AG04449 (cell line): ENCODE measurements at regions of chr19 and their contacts with region 1.

Region 1: GRCh38 chr19:55494172-55494761 is 6.0 kb downstream of the SSC5D start:
- DNase-seq: no peak
- H3K4me3 ChIP-seq: peak overlapping the region; percentile 51
- CTCF ChIP-seq: no peak

Region 2: DNA sequence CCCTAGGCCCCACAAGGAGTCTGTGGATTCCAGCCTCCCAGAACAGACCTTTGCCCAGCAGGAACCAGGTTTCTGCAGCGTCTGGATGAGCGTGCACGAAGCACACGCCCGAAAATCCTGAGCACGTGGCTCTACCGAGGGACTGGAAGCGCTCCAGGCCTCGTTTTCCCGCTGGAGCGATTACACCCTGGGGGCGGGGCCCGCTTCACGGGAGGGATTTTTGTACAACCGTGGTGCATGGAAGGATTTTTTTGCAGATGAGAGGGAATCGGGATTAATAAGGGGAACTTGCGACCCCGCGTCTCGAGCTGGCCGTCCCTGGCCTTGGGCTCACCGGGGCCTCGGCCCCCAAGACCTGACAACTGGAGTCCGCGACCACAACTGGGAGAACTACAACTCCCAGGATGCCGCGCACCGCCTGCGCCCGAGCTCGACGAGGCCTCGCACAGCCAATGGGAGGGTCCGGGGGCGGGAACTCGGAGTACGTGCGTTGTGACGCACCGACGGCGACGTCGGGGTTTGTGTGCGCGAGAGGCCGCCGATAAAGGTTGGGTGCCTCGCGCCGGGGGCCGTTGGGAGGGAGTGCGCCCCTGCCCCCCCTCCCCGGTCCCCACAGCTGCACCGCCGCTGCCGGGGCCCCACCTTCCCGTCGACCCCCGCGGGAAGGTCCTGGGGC is 18.0 kb before region 1 on chr19 and contains the start of gene ZNF628:
- CTCF ChIA-PET with region 1: interaction called, 3 read pairs
- POLR2A ChIA-PET with region 1: interaction called, 44 read pairs
- DNase-seq: peak; percentile 77
- H3K4me3 ChIP-seq: peak within 1 kb of the TSS; percentile 71
- CTCF ChIP-seq: no peak

Region 3: GRCh38 chr19:55516878-55517620 is 22.8 kb after region 1 on chr19:
- CTCF ChIA-PET with region 1: no interaction called
- POLR2A ChIA-PET with region 1: no interaction called
- DNase-seq: peak; percentile 40
- H3K4me3 ChIP-seq: peak overlapping the region; percentile 46
- CTCF ChIP-seq: peak; percentile 99